CD4-positive, alpha-beta memory T cell (primary cell): ENCODE measurements at regions of chr10 and their contacts with region 1.

Region 1: GRCh38 chr10:109883859-109884771 is 39.2 kb downstream of the XPNPEP1 start:
- DNase-seq: peak; percentile 56 to 66 (median 61)
- H3K4me3 ChIP-seq: no peak overlapping the region
- H3K4me3 Mint-ChIP-seq: no peak overlapping the region
- H3K27ac ChIP-seq: no peak overlapping the region
- H3K27ac Mint-ChIP-seq: peak overlapping the region in 4 of 7 donors; percentile 24 to 82 (median 62)
- H3K4me1 ChIP-seq: peaks cover 8% of the 10 kb centered on the region
- H3K4me1 Mint-ChIP-seq: peaks cover 4 to 24% (median 14%) of the 10 kb centered on the region in 4 donors
- H3K27me3 ChIP-seq: no peaks in the 10 kb centered on the region
- H3K27me3 Mint-ChIP-seq: no peaks in the 10 kb centered on the region

Region 2: GRCh38 chr10:109895095-109895818 is 11.1 kb after region 1 on chr10:
- CTCF ChIA-PET with region 1: interaction called, 43 read pairs
- POLR2A ChIA-PET with region 1: interaction called, 3 read pairs
- intact Hi-C with region 1: no loop called
- DNase-seq: no peak
- H3K4me3 ChIP-seq: no peak overlapping the region
- H3K4me3 Mint-ChIP-seq: no peak overlapping the region
- H3K27ac ChIP-seq: no peak overlapping the region
- H3K27ac Mint-ChIP-seq: peak overlapping the region in 5 of 7 donors; percentile 25 to 76 (median 61)
- H3K4me1 ChIP-seq: peaks cover 29% of the 10 kb centered on the region
- H3K4me1 Mint-ChIP-seq: peaks cover 34 to 95% (median 57%) of the 10 kb centered on the region in 4 donors
- H3K27me3 ChIP-seq: no peaks in the 10 kb centered on the region
- H3K27me3 Mint-ChIP-seq: no peaks in the 10 kb centered on the region

Region 3: DNA sequence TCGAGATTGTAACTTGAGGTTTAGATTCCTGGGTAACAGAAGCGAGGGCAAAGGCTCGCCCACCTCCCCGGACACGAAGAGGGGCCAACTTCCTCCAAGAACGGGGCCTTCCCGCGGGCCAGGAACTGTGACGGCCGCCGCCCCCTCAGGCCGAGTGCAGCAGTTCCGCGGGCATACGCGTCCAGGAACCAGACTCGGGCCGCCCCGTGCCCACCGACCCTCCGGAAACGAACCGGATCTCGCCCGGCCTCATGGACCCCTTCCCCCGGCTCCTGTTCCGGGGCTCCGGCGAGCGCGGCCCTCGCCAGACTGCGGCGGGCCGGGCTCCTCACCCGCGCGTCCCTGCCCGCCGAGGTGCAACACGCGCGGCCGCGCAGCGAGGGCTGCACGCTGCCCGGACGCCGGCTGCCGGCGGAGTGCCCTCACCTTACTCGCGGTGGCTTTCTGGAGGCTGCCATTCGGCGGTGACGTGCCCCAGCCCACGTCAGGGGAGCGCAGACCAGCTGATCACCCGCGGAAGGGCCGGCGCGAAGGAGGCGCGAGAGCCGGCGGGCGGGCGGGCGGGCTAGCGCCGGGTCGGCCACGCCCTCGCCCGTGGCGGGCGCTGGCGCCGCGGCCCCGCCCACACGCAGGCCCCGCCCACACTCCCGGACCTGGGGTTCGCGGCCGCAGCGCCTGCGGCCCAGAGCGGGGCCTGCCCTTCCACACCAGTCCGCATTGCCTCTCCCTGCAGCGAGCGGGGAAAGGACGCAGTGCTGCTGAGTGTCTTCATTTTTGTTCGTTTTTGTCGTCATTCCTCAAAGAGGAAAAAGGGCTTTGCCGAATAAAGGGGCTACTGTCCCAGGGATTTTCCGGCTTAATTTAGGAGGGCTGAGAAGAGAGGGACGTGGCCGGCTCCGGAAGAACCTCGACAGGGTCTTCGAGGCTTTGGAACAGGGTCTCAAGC is 39.1 kb after region 1 on chr10 and contains the start of gene XPNPEP1:
- CTCF ChIA-PET with region 1: interaction called, 14 read pairs
- POLR2A ChIA-PET with region 1: interaction called, 6 read pairs
- intact Hi-C with region 1: loop called (anchors 5 kb)
- DNase-seq: peak; percentile 75 to 83 (median 79)
- H3K4me3 ChIP-seq: peak within 1 kb of the TSS; percentile 68 to 74
- H3K4me3 Mint-ChIP-seq: peak within 1 kb of the TSS; percentile 88 to 95 (median 92)
- H3K27ac ChIP-seq: peak within 1 kb of the TSS; percentile 86
- H3K27ac Mint-ChIP-seq: peak within 1 kb of the TSS; percentile 86 to 98 (median 96)
- H3K4me1 ChIP-seq: peaks cover 54% of the 10 kb centered on the region
- H3K4me1 Mint-ChIP-seq: peaks cover 39 to 57% (median 47%) of the 10 kb centered on the region in 4 donors
- H3K27me3 ChIP-seq: no peaks in the 10 kb centered on the region
- H3K27me3 Mint-ChIP-seq: no peaks in the 10 kb centered on the region
- total RNA-seq, gene XPNPEP1: 59.0 to 63.3 TPM

Region 4: DNA sequence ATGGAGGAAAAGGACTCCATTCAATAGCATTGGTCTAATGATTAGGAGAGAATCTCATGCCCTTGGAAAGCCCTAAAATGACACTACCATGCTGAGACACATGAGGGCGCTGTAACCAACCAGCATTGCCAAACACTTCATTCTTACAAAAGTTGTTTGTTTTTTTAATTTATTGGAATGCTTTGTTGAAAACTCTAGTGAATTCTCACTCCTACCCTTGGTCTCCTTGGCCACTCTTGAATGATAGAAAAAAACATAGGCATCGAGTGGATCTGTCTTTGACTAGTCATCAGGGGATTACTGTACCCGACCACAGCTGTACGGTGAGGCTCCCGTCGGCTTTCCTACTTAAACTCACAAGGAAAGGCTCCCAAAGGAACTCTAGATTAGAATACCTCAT is 94.4 kb after region 1 on chr10:
- CTCF ChIA-PET with region 1: interaction called, 62 read pairs
- POLR2A ChIA-PET with region 1: no interaction called
- intact Hi-C with region 1: loop called (anchors 2 kb)
- DNase-seq: peak; percentile 51 to 63 (median 58)
- H3K4me3 ChIP-seq: no peak overlapping the region
- H3K4me3 Mint-ChIP-seq: no peak overlapping the region
- H3K27ac ChIP-seq: no peak overlapping the region
- H3K27ac Mint-ChIP-seq: no peak overlapping the region
- H3K4me1 ChIP-seq: no peaks in the 10 kb centered on the region
- H3K4me1 Mint-ChIP-seq: peaks cover 0 to 5% (median under 1%) of the 10 kb centered on the region in 4 donors
- H3K27me3 ChIP-seq: no peaks in the 10 kb centered on the region
- H3K27me3 Mint-ChIP-seq: no peaks in the 10 kb centered on the region

Region 5: GRCh38 chr10:110109511-110109910 is 225.4 kb after region 1 on chr10:
- CTCF ChIA-PET with region 1: interaction called, 7 read pairs
- POLR2A ChIA-PET with region 1: no interaction called
- intact Hi-C with region 1: loop called (anchors 5 kb)
- DNase-seq: no peak
- H3K4me3 ChIP-seq: no peak overlapping the region
- H3K4me3 Mint-ChIP-seq: no peak overlapping the region
- H3K27ac ChIP-seq: no peak overlapping the region
- H3K27ac Mint-ChIP-seq: peak overlapping the region in 4 of 7 donors; percentile 36 to 89 (median 64)
- H3K4me1 ChIP-seq: peaks cover 10% of the 10 kb centered on the region
- H3K4me1 Mint-ChIP-seq: peaks cover 26 to 44% (median 34%) of the 10 kb centered on the region in 4 donors
- H3K27me3 ChIP-seq: no peaks in the 10 kb centered on the region
- H3K27me3 Mint-ChIP-seq: no peaks in the 10 kb centered on the region

Region 6: DNA sequence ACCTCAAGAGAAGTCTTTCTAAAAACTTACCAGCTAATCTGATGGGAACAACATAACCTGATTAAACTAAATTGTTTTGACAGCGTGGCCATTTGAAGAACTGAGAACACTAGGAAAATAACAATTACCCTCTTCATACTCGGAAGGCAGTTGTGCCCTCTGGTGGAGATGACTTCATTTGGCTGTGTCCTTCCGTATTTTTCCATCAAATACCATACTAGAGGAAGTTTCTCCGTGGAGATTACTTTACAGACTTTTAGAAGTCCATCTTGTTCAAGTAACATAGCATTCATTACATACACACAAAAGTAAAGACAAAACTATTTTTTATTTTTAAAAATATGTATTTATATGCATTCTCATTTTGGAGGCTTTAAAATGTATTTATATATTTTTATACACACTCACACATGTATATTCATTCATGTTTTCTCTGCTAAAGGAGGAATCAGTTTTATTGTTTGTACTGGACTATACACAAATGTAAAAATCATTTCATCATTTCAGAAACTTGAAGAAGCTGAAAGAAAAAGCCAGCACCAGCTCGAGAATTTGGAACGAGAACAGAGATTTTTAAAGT is 395.4 kb after region 1 on chr10:
- CTCF ChIA-PET with region 1: interaction called, 5 read pairs
- POLR2A ChIA-PET with region 1: no interaction called
- intact Hi-C with region 1: loop called (anchors 2 kb)
- DNase-seq: peak; percentile 54 to 58 (median 58)
- H3K4me3 ChIP-seq: no peak overlapping the region
- H3K4me3 Mint-ChIP-seq: peak overlapping the region in 2 of 8 donors; percentile 32 to 58
- H3K27ac ChIP-seq: no peak overlapping the region
- H3K27ac Mint-ChIP-seq: peak overlapping the region in 1 of 7 donors; percentile 51
- H3K4me1 ChIP-seq: peaks cover 22% of the 10 kb centered on the region
- H3K4me1 Mint-ChIP-seq: peaks cover 18 to 50% (median 36%) of the 10 kb centered on the region in 4 donors
- H3K27me3 ChIP-seq: no peaks in the 10 kb centered on the region
- H3K27me3 Mint-ChIP-seq: no peaks in the 10 kb centered on the region

Region 7: GRCh38 chr10:110446954-110447608 is 563.0 kb after region 1 on chr10:
- CTCF ChIA-PET with region 1: no interaction called
- POLR2A ChIA-PET with region 1: no interaction called
- intact Hi-C with region 1: no loop called
- DNase-seq: no peak
- H3K4me3 ChIP-seq: no peak overlapping the region
- H3K4me3 Mint-ChIP-seq: peak overlapping the region in 1 of 8 donors; percentile 27
- H3K27ac ChIP-seq: no peak overlapping the region
- H3K27ac Mint-ChIP-seq: peak overlapping the region in 2 of 7 donors; percentile 5 to 54
- H3K4me1 ChIP-seq: peaks cover 3% of the 10 kb centered on the region
- H3K4me1 Mint-ChIP-seq: peaks cover 0 to 7% (median 3%) of the 10 kb centered on the region in 4 donors
- H3K27me3 ChIP-seq: no peaks in the 10 kb centered on the region
- H3K27me3 Mint-ChIP-seq: no peaks in the 10 kb centered on the region